Left cardiac atrium (tissue), 4 donors: ENCODE measurements at regions of chr3 and their contacts with region 1.

Region 1: DNA sequence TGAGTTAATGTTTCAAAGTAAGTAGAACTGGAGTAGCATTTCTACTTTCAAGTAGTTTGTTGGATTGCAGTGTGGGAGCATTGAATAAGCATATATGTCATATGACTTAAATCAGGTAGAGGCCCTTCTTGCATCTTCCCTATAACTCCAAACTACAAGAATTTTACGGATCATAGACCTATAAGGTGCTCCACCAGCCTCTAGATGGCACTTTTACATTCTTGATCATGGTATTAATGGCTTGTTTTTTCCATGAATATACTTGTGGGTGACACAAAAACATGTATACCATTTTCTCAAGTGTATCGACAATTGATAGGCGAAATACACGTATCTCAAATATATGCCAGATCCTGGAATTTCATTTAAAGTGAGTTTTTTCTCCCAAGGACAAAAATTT is 311.1 kb downstream of the ZPLD1 start:
- DNase-seq: no peak
- ATAC-seq: no peak

Region 2: GRCh38 chr3:102235679-102236078 is 510.2 kb before region 1 on chr3:
- intact Hi-C with region 1: loop called in 1 of 2 experiments (anchors 10 kb)
- DNase-seq: no peak
- ATAC-seq: no peak

Region 3: GRCh38 chr3:102673271-102674115 is 72.4 kb before region 1 on chr3:
- intact Hi-C with region 1: loop called (anchors 5 kb)
- DNase-seq: peak; percentile 52
- ATAC-seq: peak; percentile 89 to 94